GM10248 (cell line): ENCODE measurements at regions of chr5 and their contacts with region 1.

Region 1: DNA sequence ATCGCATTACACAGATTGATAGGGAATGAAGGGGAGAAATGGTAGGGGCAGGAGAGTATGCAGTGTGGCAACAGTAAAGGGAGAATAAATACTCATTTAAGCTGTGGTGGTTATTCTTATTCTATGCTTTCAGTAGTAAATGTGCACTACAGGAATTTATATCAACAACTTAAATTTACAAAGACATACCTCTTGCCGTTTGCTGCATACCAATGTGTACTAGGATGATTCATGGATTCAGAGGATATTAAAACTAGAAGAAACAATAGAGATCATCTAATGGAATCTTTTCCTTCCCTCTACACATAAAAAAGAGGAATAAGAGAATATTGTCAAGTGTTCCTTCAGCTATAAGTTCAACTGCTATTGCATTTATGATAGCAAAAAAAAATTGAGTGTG is 103.3 kb upstream of the RASA1 start:
- DNase-seq: no peak
- CTCF ChIP-seq: no peak

Region 2: GRCh38 chr5:87137283-87137682 is 27.1 kb before region 1 on chr5:
- CTCF ChIA-PET with region 1: interaction called, 11 read pairs
- POLR2A ChIA-PET with region 1: no interaction called
- DNase-seq: no peak
- CTCF ChIP-seq: no peak

Region 3: GRCh38 chr5:87432460-87432859 is 268.1 kb after region 1 on chr5:
- CTCF ChIA-PET with region 1: no interaction called
- POLR2A ChIA-PET with region 1: no interaction called
- DNase-seq: no peak
- CTCF ChIP-seq: no peak

Region 4: DNA sequence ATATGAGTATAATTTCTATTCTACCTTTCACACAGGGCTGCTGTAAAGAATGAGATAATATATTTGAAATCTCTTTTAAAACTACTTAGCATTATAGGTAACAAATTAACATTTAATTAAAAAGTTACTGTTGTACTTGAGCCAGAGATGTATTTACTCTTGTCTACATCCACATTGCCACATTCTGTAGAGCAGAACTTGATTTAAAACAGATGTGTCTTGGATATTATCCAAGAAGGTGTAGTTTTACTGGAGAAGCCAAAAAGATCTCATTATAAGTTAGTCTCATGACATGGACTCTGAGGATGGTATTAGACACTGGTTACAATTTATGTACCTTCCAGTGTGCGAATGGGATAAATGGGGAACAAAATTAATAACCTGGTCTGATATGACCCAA is 541.5 kb after region 1 on chr5:
- CTCF ChIA-PET with region 1: no interaction called
- POLR2A ChIA-PET with region 1: no interaction called
- DNase-seq: no peak
- CTCF ChIP-seq: no peak